ENCODE measurements at regions of chr1 and their contacts with region 1.

Region 1: GRCh38 chr1:24415334-24415909 is at the start of gene NIPAL3:
- DNase-seq: peak; percentile 98
- ATAC-seq: peak; percentile 99
- H3K4me3 ChIP-seq: peak within 1 kb of the TSS; percentile 80
- H3K27ac ChIP-seq: 0 out of 2 replicates have a peak within 1 kb of the TSS, but pooled peaks have one; percentile 0
- H3K4me1 ChIP-seq: peaks cover 9% of the 10 kb centered on the region
- H3K27me3 ChIP-seq: no peaks in the 10 kb centered on the region
- CTCF ChIP-seq: peak; percentile 91 to 95 (median 94)
- EP300 ChIP-seq: no peak
- POLR2A ChIP-seq: peak; percentile 40; the same call in 1 of the 2 replicates
- RAD21 ChIP-seq: peak; percentile 49
- polyA plus RNA-seq, gene NIPAL3: 2.1 TPM

Region 2: GRCh38 chr1:24186993-24187805 is 228.2 kb before region 1 on chr1 and contains the start of gene IFNLR1:
- CTCF ChIA-PET with region 1: interaction called, 11 read pairs
- POLR2A ChIA-PET with region 1: no interaction called
- RAD21 ChIA-PET with region 1: no interaction called
- SMC1A ChIA-PET with region 1: interaction called, 4 read pairs
- in situ Hi-C with region 1: no loop called
- intact Hi-C with region 1: no loop called
- DNase-seq: no peak
- ATAC-seq: peak; percentile 52
- H3K4me3 ChIP-seq: peak within 1 kb of the TSS; percentile 71; the same call in 1 of the 2 replicates
- H3K27ac ChIP-seq: peak within 1 kb of the TSS; percentile 5; the same call in 1 of the 2 replicates
- H3K4me1 ChIP-seq: peaks cover 47% of the 10 kb centered on the region
- H3K27me3 ChIP-seq: peaks cover 0 to 4% of the 10 kb centered on the region in 2 experiments; a peak in 2 of 4 replicates
- CTCF ChIP-seq: no peak
- EP300 ChIP-seq: no peak
- POLR2A ChIP-seq: peak; percentile 68
- RAD21 ChIP-seq: no peak
- polyA plus RNA-seq, gene IFNLR1: 0.31 to 0.88 TPM

Region 3: DNA sequence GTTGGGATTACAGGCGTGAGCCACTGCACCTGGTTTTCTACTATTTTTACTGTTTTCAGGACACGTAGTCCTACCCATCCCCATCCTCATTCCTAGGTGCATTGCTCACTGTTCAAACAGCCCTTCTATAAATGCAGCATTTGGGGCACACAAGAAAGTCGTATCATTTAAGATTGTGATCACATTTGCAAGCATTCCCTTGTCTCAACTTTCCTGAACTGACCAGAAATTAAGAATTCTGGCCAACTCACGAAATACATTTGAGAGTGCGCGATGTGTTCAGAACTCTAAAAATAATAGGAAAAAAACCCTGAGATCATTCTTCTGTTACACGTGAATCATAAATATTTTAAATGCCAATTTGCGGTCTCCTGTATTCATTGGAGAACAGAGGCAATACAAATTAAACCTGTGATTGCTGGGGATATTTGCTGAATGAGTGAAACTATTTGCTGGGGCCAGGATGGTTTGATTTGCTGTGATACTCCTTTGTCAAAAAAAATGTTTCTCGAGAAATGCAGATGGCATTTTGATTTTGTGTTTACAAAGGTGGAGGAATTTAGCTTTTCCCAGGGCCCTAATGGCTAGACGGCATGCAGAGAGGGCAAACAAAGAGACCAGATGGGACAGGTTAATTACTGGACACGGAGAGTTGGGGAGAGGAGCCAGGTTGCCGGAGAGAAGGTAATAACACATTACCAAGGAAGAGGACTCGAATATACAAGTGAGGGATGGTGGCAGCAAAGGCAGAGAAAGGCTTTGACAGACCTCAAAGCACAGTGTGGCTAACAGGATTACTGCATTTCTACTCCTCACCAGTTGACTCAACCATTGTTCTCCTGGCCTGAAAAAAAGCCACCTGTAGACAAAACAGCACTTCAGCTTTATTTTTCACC is 40.3 kb before region 1 on chr1:
- CTCF ChIA-PET with region 1: no interaction called
- POLR2A ChIA-PET with region 1: no interaction called
- RAD21 ChIA-PET with region 1: no interaction called
- SMC1A ChIA-PET with region 1: no interaction called
- in situ Hi-C with region 1: no loop called
- intact Hi-C with region 1: no loop called
- DNase-seq: no peak
- ATAC-seq: no peak
- H3K4me3 ChIP-seq: no peak overlapping the region
- H3K27ac ChIP-seq: no peak overlapping the region
- H3K4me1 ChIP-seq: peaks cover 12% of the 10 kb centered on the region
- H3K27me3 ChIP-seq: no peaks in the 10 kb centered on the region; a peak in 1 of 4 replicates
- CTCF ChIP-seq: no peak
- EP300 ChIP-seq: no peak
- POLR2A ChIP-seq: no peak
- RAD21 ChIP-seq: no peak

Region 4: DNA sequence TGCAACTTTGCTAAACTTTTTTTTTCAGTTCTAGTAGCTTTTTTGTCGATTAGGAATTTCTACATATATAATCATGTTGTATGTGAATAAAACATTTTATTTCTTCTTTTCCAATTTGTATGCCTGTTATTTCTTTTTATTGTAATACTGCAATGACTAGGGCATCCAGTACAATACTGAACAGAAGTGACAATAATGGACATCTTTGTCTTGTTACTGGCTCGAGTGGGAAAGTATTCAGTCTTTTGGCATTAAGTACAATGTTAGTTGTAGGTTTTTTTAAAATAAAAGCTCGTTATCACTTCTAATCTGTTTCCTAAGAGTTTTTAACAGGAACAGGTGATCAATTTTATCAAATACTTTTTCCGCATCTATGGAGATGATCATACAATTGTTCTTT is 11.6 kb before region 1 on chr1:
- CTCF ChIA-PET with region 1: interaction called, 17 read pairs
- POLR2A ChIA-PET with region 1: interaction called, 6 read pairs
- RAD21 ChIA-PET with region 1: interaction called, 3 read pairs
- SMC1A ChIA-PET with region 1: interaction called, 6 read pairs
- in situ Hi-C with region 1: no loop called
- intact Hi-C with region 1: no loop called
- DNase-seq: no peak
- ATAC-seq: no peak
- H3K4me3 ChIP-seq: no peak overlapping the region
- H3K27ac ChIP-seq: no peak overlapping the region
- H3K4me1 ChIP-seq: no peaks in the 10 kb centered on the region
- H3K27me3 ChIP-seq: no peaks in the 10 kb centered on the region
- CTCF ChIP-seq: no peak
- EP300 ChIP-seq: no peak
- POLR2A ChIP-seq: no peak
- RAD21 ChIP-seq: no peak

Region 5: GRCh38 chr1:24435782-24436365 is 20.5 kb after region 1 on chr1:
- CTCF ChIA-PET with region 1: interaction called, 28 read pairs
- POLR2A ChIA-PET with region 1: interaction called, 3 read pairs
- RAD21 ChIA-PET with region 1: interaction called, 4 read pairs
- SMC1A ChIA-PET with region 1: interaction called, 3 read pairs
- in situ Hi-C with region 1: no loop called
- intact Hi-C with region 1: no loop called
- DNase-seq: no peak
- ATAC-seq: no peak
- H3K4me3 ChIP-seq: no peak overlapping the region
- H3K27ac ChIP-seq: no peak overlapping the region
- H3K4me1 ChIP-seq: no peaks in the 10 kb centered on the region
- H3K27me3 ChIP-seq: no peaks in the 10 kb centered on the region
- CTCF ChIP-seq: no peak
- EP300 ChIP-seq: no peak
- POLR2A ChIP-seq: no peak
- RAD21 ChIP-seq: no peak

Region 6: DNA sequence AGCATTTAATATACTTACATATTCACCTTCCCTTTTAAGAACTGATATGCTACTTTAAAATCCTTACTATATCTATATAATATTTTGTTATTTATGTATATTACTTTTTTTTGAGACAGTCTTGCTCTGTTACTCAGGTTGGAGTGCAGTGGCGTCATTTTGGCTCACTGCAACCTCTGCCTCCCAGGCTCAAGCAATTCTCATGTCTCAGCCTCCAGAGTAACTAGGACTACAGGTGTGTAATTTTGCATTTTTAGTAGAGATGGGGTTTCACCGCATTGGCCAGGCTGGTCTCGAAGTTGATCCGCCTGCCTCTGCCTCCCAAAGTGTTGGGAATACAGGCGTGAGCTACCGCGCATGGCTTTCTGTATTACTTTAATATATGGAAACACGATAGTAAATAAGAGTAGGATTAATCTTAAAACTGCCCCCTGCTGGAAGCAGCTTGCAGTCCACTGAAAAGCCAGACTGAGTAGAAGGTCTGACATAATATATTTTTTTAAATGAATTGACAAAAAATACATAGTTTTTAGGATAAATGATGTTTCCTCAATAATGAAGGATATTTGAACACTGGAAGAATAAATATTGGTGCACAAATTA is 111.6 kb after region 1 on chr1:
- CTCF ChIA-PET with region 1: interaction called, 52 read pairs
- POLR2A ChIA-PET with region 1: interaction called, 3 read pairs
- RAD21 ChIA-PET with region 1: interaction called, 9 read pairs
- SMC1A ChIA-PET with region 1: interaction called, 4 read pairs
- in situ Hi-C with region 1: no loop called
- intact Hi-C with region 1: loop called (anchors 5 kb)
- DNase-seq: no peak
- ATAC-seq: 0 out of 3 replicates have a peak, but pooled peaks have one; percentile 29
- H3K4me3 ChIP-seq: no peak overlapping the region
- H3K27ac ChIP-seq: no peak overlapping the region
- H3K4me1 ChIP-seq: no peaks in the 10 kb centered on the region
- H3K27me3 ChIP-seq: no peaks in the 10 kb centered on the region; a peak in 2 of 4 replicates
- CTCF ChIP-seq: peak; percentile 30 to 52 (median 47); a peak in 4 of 6 replicates
- EP300 ChIP-seq: no peak
- POLR2A ChIP-seq: no peak
- RAD21 ChIP-seq: peak; percentile 33; the same call in 1 of the 2 replicates

Region 7: GRCh38 chr1:24635195-24635843 is 219.9 kb after region 1 on chr1:
- CTCF ChIA-PET with region 1: interaction called, 8 read pairs
- POLR2A ChIA-PET with region 1: no interaction called
- RAD21 ChIA-PET with region 1: interaction called, 3 read pairs
- SMC1A ChIA-PET with region 1: no interaction called
- in situ Hi-C with region 1: no loop called
- intact Hi-C with region 1: loop called (anchors 2 kb)
- DNase-seq: no peak
- ATAC-seq: peak; percentile 86
- H3K4me3 ChIP-seq: no peak overlapping the region
- H3K27ac ChIP-seq: no peak overlapping the region
- H3K4me1 ChIP-seq: no peaks in the 10 kb centered on the region
- H3K27me3 ChIP-seq: no peaks in the 10 kb centered on the region
- CTCF ChIP-seq: peak; percentile 44 to 70 (median 57); a peak in 4 of 6 replicates
- EP300 ChIP-seq: no peak
- POLR2A ChIP-seq: no peak
- RAD21 ChIP-seq: peak; percentile 68